ENCODE measurements at regions of chr5 and their contacts with region 1.

Region 1: DNA sequence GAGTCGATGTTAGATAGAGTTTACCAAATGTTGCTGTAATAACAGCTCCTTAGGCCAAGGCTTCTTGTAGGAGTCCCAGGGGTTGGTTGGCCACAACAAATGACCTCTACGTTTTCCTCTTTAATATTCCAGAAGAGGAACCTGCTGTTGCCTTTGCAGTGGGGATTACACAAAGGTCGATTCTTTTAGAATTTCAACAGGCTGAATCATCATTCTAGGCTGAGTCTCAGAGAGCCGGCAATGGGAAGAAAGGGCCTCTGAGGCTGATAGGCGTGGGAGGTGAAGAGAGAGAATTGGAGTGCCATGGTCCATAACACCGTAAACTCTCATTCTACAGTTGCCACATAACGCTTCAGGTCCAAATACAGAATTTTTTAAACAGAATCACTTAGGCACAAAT is 405.9 kb upstream of the DAP start:
- DNase-seq: no peak
- ATAC-seq: no peak
- H3K4me3 ChIP-seq: no peak overlapping the region
- H3K27ac ChIP-seq: no peak overlapping the region
- H3K4me1 ChIP-seq: no peaks in the 10 kb centered on the region
- H3K27me3 ChIP-seq: 0 out of 2 replicates have a peak, but pooled peaks cover 6% of the 10 kb centered on the region
- CTCF ChIP-seq: no peak

Region 2: GRCh38 chr5:10885026-10885425 is 281.9 kb before region 1 on chr5:
- CTCF ChIA-PET with region 1: no interaction called
- POLR2A ChIA-PET with region 1: no interaction called
- in situ Hi-C with region 1: no loop called
- intact Hi-C with region 1: no loop called
- DNase-seq: peak; percentile 32
- ATAC-seq: no peak
- H3K4me3 ChIP-seq: no peak overlapping the region
- H3K27ac ChIP-seq: no peak overlapping the region
- H3K4me1 ChIP-seq: no peaks in the 10 kb centered on the region
- H3K27me3 ChIP-seq: peaks cover 3% of the 10 kb centered on the region; the same call in 1 of the 2 replicates
- CTCF ChIP-seq: no peak

Region 3: GRCh38 chr5:11007269-11007668 is 159.7 kb before region 1 on chr5:
- CTCF ChIA-PET with region 1: no interaction called
- POLR2A ChIA-PET with region 1: no interaction called
- in situ Hi-C with region 1: no loop called
- intact Hi-C with region 1: no loop called
- DNase-seq: no peak
- ATAC-seq: no peak
- H3K4me3 ChIP-seq: no peak overlapping the region
- H3K27ac ChIP-seq: no peak overlapping the region
- H3K4me1 ChIP-seq: no peaks in the 10 kb centered on the region
- H3K27me3 ChIP-seq: peaks cover 10% of the 10 kb centered on the region; the same call in 1 of the 2 replicates
- CTCF ChIP-seq: no peak

Region 4: GRCh38 chr5:11281842-11282241 is 114.9 kb after region 1 on chr5:
- CTCF ChIA-PET with region 1: no interaction called
- POLR2A ChIA-PET with region 1: no interaction called
- in situ Hi-C with region 1: no loop called
- intact Hi-C with region 1: no loop called
- DNase-seq: no peak
- ATAC-seq: no peak
- H3K4me3 ChIP-seq: no peak overlapping the region
- H3K27ac ChIP-seq: no peak overlapping the region
- H3K4me1 ChIP-seq: no peaks in the 10 kb centered on the region
- H3K27me3 ChIP-seq: no peaks in the 10 kb centered on the region
- CTCF ChIP-seq: no peak

Region 5: DNA sequence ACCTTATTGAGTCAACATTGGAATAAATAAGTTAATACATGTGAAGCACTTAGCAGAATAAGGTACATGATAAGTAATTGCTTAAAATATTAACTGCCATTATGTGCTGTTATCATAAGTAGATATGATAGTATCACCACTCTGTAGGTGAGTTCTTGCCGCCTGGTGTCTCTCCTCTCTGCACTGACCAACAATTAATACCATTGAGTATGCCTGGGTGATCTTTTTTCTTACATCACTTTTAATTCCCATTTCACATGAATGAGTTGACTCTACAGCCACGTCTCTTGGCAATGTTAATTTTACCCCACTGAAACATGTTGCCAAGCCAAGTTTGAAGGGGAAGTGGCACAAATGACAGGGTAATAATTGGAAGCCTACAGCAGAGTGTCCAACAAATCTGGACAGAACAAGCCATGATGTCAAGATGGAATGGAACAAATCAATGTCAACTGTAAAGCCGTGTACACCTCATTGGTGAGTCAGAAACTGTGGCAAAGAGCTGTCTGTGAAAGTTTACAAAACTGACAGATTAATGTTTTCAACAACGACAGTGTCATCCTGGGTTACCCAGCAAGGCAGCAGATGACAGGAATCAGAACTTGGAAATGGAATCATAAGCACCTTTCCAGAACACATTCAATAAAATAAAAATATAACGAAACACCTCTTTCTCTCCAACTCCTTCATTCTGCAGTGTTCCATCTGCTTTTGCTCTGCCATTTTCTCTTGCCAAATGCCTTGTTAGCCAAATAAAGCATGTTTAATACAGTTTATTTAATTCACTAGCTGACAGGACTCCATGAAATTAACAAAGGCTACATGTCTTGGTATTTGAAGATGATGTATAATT is 406.4 kb after region 1 on chr5:
- CTCF ChIA-PET with region 1: no interaction called
- POLR2A ChIA-PET with region 1: interaction called, 10 read pairs
- in situ Hi-C with region 1: no loop called
- intact Hi-C with region 1: no loop called
- DNase-seq: no peak
- ATAC-seq: no peak
- H3K4me3 ChIP-seq: no peak overlapping the region
- H3K27ac ChIP-seq: no peak overlapping the region
- H3K4me1 ChIP-seq: no peaks in the 10 kb centered on the region
- H3K27me3 ChIP-seq: no peaks in the 10 kb centered on the region
- CTCF ChIP-seq: no peak